CD8-positive, alpha-beta T cell (primary cell): ENCODE measurements at regions of chr14 and their contacts with region 1.

Region 1: GRCh38 chr14:67240978-67241414 is 239 bp upstream of the PALS1 start:
- DNase-seq: peak; percentile 81 to 96 (median 91)
- ATAC-seq: peak; percentile 93
- H3K4me3 ChIP-seq: peak overlapping the region; percentile 65 to 76
- H3K4me3 Mint-ChIP-seq: peak overlapping the region; percentile 91
- H3K27ac ChIP-seq: peak overlapping the region; percentile 62
- H3K27ac Mint-ChIP-seq: peak overlapping the region; percentile 82
- H3K4me1 ChIP-seq: peaks cover 14% of the 10 kb centered on the region
- H3K4me1 Mint-ChIP-seq: peaks cover 29% of the 10 kb centered on the region
- H3K27me3 ChIP-seq: no peaks in the 10 kb centered on the region
- H3K27me3 Mint-ChIP-seq: no peaks in the 10 kb centered on the region
- CTCF ChIP-seq: no peak

Region 2: GRCh38 chr14:66507722-66508546 is 733.1 kb before region 1 on chr14 and contains the start of gene GPHN:
- CTCF ChIA-PET with region 1: no interaction called
- POLR2A ChIA-PET with region 1: interaction called, 3 read pairs
- intact Hi-C with region 1: loop called (anchors 2 to 5 kb)
- DNase-seq: peak; percentile 53 to 91 (median 82)
- ATAC-seq: peak; percentile 90
- H3K4me3 ChIP-seq: peak within 1 kb of the TSS; percentile 75 to 81
- H3K4me3 Mint-ChIP-seq: peak within 1 kb of the TSS; percentile 99
- H3K27ac ChIP-seq: peak within 1 kb of the TSS; percentile 55 to 67
- H3K27ac Mint-ChIP-seq: peak within 1 kb of the TSS; percentile 91
- H3K4me1 ChIP-seq: no peaks in the 10 kb centered on the region
- H3K4me1 Mint-ChIP-seq: peaks cover 35% of the 10 kb centered on the region
- H3K27me3 ChIP-seq: no peaks in the 10 kb centered on the region
- H3K27me3 Mint-ChIP-seq: no peaks in the 10 kb centered on the region
- CTCF ChIP-seq: no peak
- total RNA-seq, gene GPHN: 8.2 to 9.3 TPM

Region 3: DNA sequence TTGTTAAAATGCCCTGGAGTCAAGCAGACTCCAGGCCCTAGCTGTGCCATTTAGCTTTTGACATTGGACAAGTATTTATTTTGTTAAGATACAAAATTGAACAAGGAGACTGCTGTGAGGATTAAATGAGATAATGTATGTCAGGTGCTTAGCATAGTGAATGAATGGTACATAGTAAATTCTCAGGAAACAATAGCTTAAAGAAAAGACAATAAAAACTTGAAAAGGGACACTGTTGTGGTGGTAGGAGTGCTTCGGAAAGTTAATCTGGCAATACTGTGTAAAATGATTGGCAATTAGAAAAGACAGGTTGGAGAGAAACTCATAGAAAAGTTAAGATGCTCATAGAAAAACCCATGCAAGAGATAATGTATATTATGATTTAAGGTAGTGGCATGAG is 20.0 kb after region 1 on chr14:
- CTCF ChIA-PET with region 1: no interaction called
- POLR2A ChIA-PET with region 1: no interaction called
- intact Hi-C with region 1: loop called in 1 of 2 experiments (anchors 2 kb)
- DNase-seq: no peak
- ATAC-seq: no peak
- H3K4me3 ChIP-seq: no peak overlapping the region
- H3K4me3 Mint-ChIP-seq: no peak overlapping the region
- H3K27ac ChIP-seq: no peak overlapping the region
- H3K27ac Mint-ChIP-seq: no peak overlapping the region
- H3K4me1 ChIP-seq: no peaks in the 10 kb centered on the region
- H3K4me1 Mint-ChIP-seq: peaks cover 9% of the 10 kb centered on the region
- H3K27me3 ChIP-seq: no peaks in the 10 kb centered on the region
- H3K27me3 Mint-ChIP-seq: no peaks in the 10 kb centered on the region
- CTCF ChIP-seq: no peak

Region 4: GRCh38 chr14:67487937-67488893 is 247.2 kb after region 1 on chr14 and contains the start of gene TMEM229B:
- CTCF ChIA-PET with region 1: no interaction called
- POLR2A ChIA-PET with region 1: no interaction called
- intact Hi-C with region 1: loop called in 1 of 2 experiments (anchors 10 kb)
- DNase-seq: peak; percentile 43 to 90 (median 77)
- ATAC-seq: peak; percentile 96
- H3K4me3 ChIP-seq: peak within 1 kb of the TSS; percentile 68 to 84
- H3K4me3 Mint-ChIP-seq: peak within 1 kb of the TSS; percentile 99
- H3K27ac ChIP-seq: peak within 1 kb of the TSS; percentile 92 to 93
- H3K27ac Mint-ChIP-seq: peak within 1 kb of the TSS; percentile 100
- H3K4me1 ChIP-seq: peaks cover 51% of the 10 kb centered on the region
- H3K4me1 Mint-ChIP-seq: peaks cover 79% of the 10 kb centered on the region
- H3K27me3 ChIP-seq: no peaks in the 10 kb centered on the region
- H3K27me3 Mint-ChIP-seq: no peaks in the 10 kb centered on the region
- CTCF ChIP-seq: no peak
- total RNA-seq, gene TMEM229B: 4.5 to 4.8 TPM